ENCODE measurements at regions of chr20 and their contacts with region 1.

Region 1: GRCh38 chr20:40471261-40471629 is 217.8 kb downstream of the MAFB start:
- H3K4me3 Mint-ChIP-seq: no peak overlapping the region
- H3K27ac Mint-ChIP-seq: peak overlapping the region; percentile 86
- H3K4me1 Mint-ChIP-seq: peaks cover 63% of the 10 kb centered on the region
- H3K27me3 Mint-ChIP-seq: peaks cover 3% of the 10 kb centered on the region

Region 2: GRCh38 chr20:39885975-39886649 is 585.1 kb before region 1 on chr20:
- intact Hi-C with region 1: loop called (anchors 10 kb)
- H3K4me3 Mint-ChIP-seq: peak overlapping the region; percentile 44
- H3K27ac Mint-ChIP-seq: peak overlapping the region; percentile 81
- H3K4me1 Mint-ChIP-seq: peaks cover 27% of the 10 kb centered on the region
- H3K27me3 Mint-ChIP-seq: peaks cover 9% of the 10 kb centered on the region

Region 3: GRCh38 chr20:40192081-40192480 is 279.2 kb before region 1 on chr20:
- intact Hi-C with region 1: no loop called
- H3K4me3 Mint-ChIP-seq: no peak overlapping the region
- H3K27ac Mint-ChIP-seq: no peak overlapping the region
- H3K4me1 Mint-ChIP-seq: peaks cover 10% of the 10 kb centered on the region
- H3K27me3 Mint-ChIP-seq: peaks cover 26% of the 10 kb centered on the region

Region 4: DNA sequence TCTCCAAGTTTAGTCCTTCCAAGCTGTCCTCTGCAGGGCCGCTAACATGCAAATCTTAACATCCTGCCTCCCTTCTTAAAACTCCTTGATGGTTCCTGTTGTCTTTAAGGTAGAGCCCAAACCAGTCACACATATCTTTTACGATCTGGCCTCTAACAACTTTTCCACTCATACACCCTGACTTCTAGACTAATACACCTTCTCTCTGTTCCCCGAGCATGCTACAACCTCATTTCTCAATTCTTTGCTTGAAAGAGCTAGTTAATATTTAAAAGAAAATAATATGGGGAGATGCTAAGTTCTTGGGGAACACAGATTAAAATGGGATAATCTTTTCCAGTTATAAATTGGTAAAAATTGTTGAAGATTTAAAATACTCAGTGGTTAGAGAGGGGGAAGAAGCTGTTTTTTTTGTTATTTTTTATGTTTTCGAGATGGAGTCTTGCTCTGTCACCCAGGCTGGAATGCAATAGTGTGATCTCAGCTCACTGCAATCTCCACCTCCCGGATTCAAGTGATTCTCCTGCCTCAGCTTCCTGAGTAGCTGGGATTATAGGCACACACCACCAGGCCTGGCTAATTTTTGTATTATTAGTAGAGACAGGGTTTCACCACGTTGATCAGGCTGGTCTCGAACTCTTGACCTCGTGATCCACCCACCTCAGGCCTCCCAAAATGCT is 32.9 kb before region 1 on chr20:
- intact Hi-C with region 1: loop called (anchors 5 kb)
- H3K4me3 Mint-ChIP-seq: no peak overlapping the region
- H3K27ac Mint-ChIP-seq: peak overlapping the region; percentile 90
- H3K4me1 Mint-ChIP-seq: peaks cover 80% of the 10 kb centered on the region
- H3K27me3 Mint-ChIP-seq: no peaks in the 10 kb centered on the region

Region 5: DNA sequence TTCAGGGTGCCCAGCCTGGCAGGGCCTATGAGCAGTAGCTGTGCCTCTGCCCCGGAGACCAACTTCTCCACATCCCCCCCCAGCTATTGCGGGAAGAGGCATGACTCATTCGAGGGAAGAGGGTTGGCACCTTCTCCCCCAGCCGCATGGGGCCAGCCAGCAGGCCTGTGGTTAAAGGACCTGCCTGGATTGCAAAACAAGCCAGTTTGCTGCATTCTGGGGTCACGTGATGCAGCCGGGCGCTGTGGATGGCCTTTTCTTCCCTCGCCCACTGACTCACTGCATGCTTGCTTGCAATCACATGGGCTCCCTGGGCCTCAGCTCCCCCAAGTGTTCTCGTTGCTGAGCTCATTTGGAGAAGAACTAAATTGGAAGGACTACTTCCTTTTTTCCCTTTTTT is 35.3 kb after region 1 on chr20:
- intact Hi-C with region 1: loop called (anchors 5 kb)
- H3K4me3 Mint-ChIP-seq: no peak overlapping the region
- H3K27ac Mint-ChIP-seq: peak overlapping the region; percentile 77
- H3K4me1 Mint-ChIP-seq: peaks cover 83% of the 10 kb centered on the region
- H3K27me3 Mint-ChIP-seq: no peaks in the 10 kb centered on the region

Measured in dendritic cell treated with granulocyte-macrophage colony-stimulating factor and Interleukin-4, amounts not matched to agents 40 ng/mL and 50 ng/mL, for 4 days (primary cell).